Astrocyte of the cerebellum (primary cell): ENCODE measurements at regions of chr2 and their contacts with region 1.

Region 1: DNA sequence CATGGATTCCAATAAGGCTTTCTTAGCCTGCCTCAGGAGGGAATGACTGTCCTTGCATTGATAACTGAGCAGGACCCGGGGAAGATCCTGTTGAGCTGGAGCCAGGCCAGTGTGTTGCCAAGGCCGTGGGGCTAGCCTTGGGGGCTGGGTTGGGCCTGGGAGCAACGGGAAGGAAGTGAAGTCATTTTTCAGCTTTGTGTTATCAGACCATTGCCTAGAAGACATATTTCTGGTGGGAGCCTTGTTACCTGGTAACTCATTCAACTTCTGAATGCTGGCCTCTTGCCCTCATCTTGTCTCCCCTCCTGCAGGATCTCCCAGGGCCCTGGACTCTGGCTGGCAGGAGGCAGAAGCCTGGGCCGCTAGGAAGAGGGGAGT is 92.7 kb upstream of the MGAT5 start:
- DNase-seq: no peak
- H3K4me3 ChIP-seq: no peak overlapping the region
- CTCF ChIP-seq: no peak

Region 2: DNA sequence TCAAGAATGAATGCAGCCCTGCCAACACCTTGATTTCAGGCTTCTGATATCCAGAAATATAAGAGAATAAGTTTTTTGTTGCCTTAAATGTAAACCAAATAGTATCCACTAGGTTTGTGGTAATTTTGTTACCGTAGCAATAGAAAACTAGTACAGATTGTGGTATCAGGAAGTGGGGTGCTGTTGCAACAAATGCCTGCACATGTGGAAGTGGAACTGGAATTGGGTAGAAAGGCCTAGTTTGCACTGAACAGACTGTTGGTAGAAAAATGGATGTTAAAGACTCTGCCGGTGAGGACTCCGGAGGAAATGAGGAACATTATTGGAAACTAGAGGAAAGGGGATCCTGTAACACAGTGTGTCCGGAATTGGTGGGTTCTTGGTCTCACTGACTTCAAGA is 53.0 kb before region 1 on chr2:
- in situ Hi-C with region 1: no loop called
- DNase-seq: no peak
- H3K4me3 ChIP-seq: no peak overlapping the region
- CTCF ChIP-seq: no peak

Region 3: DNA sequence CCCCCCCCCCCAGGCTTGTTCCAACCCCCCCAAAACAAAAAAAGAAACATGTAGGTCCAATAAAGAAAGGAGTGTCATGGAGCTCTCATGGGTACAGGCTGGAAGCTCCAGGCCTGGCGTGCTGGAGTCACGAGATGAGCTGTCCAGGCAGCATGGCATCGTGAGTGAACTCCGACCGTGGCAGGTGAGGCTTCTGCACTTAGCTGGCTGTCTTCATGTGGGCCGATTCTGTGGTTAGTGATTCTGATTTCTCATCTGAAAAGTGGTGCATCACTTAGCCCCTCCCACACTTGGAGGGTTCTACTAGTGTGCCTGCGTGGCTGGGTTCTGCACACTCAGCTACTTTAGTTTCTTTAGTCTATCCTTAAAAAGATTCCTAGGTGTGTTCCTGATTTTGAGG is 33.7 kb before region 1 on chr2:
- in situ Hi-C with region 1: loop called (anchors 5 kb)
- DNase-seq: no peak
- H3K4me3 ChIP-seq: no peak overlapping the region
- CTCF ChIP-seq: no peak

Region 4: GRCh38 chr2:134218930-134219658 is 57.9 kb after region 1 on chr2:
- in situ Hi-C with region 1: loop called (anchors 5 kb)
- DNase-seq: no peak
- H3K4me3 ChIP-seq: no peak overlapping the region
- CTCF ChIP-seq: no peak

Region 5: GRCh38 chr2:134253804-134254203 is 92.6 kb after region 1 on chr2 and contains the start of gene MGAT5:
- in situ Hi-C with region 1: no loop called
- DNase-seq: no peak
- H3K4me3 ChIP-seq: no peak within 1 kb of the TSS
- CTCF ChIP-seq: no peak